ENCODE measurements at regions of chr11 and their contacts with region 1.

Region 1: DNA sequence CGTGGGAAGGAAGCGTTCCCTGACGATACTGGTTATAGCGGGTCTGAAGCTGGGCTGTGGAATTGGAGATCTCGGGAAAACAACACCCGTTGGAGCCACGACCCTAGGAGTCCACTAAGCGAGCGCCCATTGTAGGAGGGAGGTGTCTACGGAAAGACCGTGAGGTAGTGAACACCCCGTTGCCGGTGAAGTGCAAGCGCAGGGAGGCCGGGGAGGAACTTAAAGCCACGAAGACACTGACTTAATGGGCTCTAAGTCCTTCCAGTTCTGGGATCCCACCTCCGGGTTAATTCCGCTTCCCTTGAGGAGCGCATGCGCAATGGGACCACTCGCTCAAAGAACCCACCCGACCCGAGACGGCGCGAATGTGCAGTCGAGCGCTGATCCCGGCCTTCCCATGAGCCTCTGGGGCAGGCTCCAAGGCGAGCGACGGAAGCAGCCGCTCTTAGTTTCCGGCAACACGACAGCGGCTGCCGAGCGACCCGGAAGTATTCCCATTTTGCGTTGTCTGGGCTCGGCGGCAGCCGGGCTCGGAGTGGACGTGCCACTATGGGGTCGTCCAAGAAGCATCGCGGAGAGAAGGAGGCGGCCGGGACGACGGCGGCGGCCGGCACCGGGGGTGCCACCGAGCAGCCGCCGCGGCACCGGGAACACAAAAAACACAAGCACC is at the start of gene SART1:
- DNase-seq: peak; percentile 98
- H3K4me3 ChIP-seq: peak within 1 kb of the TSS; percentile 93 to 96 (median 95)
- H3K27ac ChIP-seq: peak within 1 kb of the TSS; percentile 54 to 88 (median 77)
- H3K4me1 ChIP-seq: peaks cover 24 to 46% of the 10 kb centered on the region in 2 donors
- H3K27me3 ChIP-seq: no peaks in the 10 kb centered on the region
- CTCF ChIP-seq: peak in 1 of 6 experiments; percentile 38
- POLR2A ChIP-seq: peak in 1 of 2 donors; percentile 77
- total RNA-seq, gene SART1: 22.2 to 46.1 (median 24.2) TPM

Region 2: DNA sequence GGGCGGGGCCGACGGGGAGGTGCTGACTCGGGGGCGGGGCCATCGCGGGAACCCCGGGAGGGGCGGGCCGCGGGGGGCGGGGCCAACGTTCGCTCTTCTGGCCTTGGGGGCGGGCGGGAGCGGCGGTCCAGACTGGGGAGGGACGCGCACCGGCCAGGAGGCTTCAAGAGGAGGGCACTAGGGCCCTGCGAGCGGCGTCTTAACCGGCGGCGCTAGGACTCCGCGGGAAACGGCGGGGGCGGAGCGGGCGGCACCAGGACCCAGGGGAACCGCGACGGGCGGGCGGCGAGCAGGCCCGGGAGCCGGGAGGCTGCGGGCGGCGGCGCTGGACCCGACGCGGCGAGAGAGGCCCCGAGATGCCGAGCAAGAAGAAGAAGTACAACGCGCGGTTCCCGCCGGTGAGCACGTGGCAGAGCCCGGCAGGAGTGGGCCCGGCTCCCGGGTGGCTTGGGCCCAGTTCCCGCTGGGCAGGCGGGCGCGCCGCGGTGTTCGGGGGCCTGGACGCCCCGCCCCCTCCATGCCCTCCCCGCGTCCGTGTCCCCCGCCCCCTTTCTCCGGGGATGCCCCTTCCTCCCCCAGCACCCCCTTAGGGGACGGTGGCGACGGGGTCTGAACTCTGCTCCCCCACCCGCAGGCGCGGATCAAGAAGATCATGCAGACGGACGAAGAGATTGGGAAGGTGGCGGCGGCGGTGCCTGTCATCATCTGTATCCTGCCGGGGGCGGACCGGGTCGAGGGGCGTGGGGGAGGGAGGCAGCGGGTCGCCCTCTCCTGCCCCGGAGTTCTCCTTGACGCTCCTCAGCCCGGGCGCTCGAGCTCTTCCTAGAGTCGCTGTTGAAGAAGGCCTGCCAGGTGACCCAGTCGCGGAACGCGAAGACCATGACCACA is 42.0 kb before region 1 on chr11 and contains the start of gene DRAP1:
- intact Hi-C with region 1: loop called (anchors 5 kb)
- DNase-seq: peak; percentile 99
- H3K4me3 ChIP-seq: peak within 1 kb of the TSS; percentile 95 to 99 (median 96)
- H3K27ac ChIP-seq: peak within 1 kb of the TSS; percentile 82 to 85 (median 85)
- H3K4me1 ChIP-seq: peaks cover 27 to 47% of the 10 kb centered on the region in 2 donors
- H3K27me3 ChIP-seq: no peaks in the 10 kb centered on the region
- CTCF ChIP-seq: peak in 2 of 6 experiments; percentile 5 to 35
- POLR2A ChIP-seq: peak; percentile 52 to 80
- total RNA-seq, gene DRAP1: 82.0 to 184 (median 132) TPM

Region 3: DNA sequence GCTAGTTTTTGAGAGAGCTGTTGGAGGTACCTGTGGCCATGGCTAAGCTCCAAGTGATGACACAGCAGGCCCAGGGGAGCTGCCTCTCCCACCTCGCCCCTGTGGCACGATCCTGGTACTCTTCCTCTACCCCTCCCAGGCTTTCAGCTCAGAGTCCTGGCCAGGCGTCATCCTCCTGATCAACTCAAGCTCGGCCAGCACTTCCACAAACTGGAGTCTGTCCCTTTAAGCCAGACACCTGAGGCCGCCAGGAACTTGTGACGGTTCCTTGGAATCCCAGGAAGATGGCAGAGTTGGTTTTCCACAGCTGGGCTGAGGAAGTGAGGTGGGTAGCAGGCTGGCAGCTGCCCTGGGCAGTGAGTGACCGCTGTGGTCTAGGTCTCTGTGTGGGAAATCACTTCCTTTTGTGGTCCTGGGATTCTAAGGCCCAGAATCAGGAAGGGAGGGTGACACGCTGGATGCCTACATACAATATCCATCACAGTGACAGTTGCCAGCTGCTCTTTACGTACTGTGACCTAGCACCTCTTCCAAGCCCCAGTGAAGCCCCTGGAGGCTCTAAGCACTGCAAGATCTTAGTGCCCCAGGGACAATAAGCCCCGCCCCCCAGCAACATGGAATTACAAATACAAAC is 47.2 kb after region 1 on chr11:
- intact Hi-C with region 1: loop called (anchors 5 kb)
- DNase-seq: peak; percentile 77
- H3K4me3 ChIP-seq: no peak overlapping the region
- H3K27ac ChIP-seq: peak overlapping the region in 2 of 3 donors; percentile 43 to 79
- H3K4me1 ChIP-seq: peaks cover 12 to 38% of the 10 kb centered on the region in 2 donors
- H3K27me3 ChIP-seq: no peaks in the 10 kb centered on the region
- CTCF ChIP-seq: no peak
- POLR2A ChIP-seq: no peak

Measured in thyroid gland (tissue), 4 donors.